MCF 10A (cell line): ENCODE measurements at regions of chrX and their contacts with region 1.

Region 1: DNA sequence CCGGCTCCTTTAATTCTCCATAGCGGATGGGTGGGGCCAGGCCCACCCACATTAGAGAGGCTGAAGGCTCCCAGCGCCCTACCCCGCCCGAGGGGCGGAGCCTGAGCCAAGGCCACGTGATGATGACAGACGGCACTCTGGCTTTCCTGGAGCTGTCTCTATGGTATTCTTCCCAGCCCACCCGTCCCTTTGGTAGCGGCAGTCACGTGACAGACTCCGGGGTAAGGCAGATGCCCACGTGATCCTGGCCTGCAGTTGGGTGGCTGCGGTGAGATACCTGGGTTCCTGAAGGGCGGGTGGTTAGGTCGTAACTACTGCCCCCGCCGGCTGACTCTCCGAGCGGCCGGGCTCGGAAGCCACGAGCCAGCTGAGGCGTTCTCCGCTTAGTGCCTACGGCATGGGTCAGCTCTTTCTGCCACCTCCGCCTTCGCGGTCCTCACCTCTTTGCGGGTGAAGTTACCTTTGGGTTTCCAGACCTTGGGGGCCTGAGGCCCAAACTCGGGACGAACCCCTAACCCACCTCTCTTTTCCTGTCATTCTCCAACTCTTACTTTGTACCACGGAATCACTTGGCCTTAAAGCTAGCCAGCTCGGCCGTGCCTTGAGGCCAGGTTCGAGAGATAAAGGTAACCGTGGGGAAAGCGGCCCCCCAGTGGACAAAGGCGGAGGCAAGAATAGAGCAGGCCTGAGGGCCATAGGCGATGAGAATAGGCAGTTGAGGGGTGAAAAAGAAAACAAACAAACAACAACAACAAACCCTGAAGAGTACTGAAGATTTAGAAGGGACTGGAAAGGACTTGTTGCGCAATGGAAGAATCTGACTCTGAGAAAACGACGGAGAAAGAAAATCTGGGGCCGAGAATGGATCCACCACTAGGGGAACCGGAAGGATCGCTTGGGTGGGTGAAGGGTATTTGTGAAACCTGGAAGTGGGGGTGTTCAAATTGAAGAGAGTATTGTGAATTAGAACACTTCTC is at the start of gene RRAGB:
- DNase-seq: peak; percentile 93
- H3K4me3 Mint-ChIP-seq: peak within 1 kb of the TSS; percentile 82
- H3K27ac Mint-ChIP-seq: peak within 1 kb of the TSS; percentile 83
- H3K4me1 Mint-ChIP-seq: no peaks in the 10 kb centered on the region
- H3K27me3 Mint-ChIP-seq: no peaks in the 10 kb centered on the region
- CTCF ChIP-seq: peak; percentile 37
- total RNA-seq, gene RRAGB: 7.9 and 10.6 TPM in 2 replicates

Region 2: GRCh38 chrX:55135171-55135570 is 582.6 kb before region 1 on chrX:
- CTCF ChIA-PET with region 1: interaction called, 4 read pairs
- POLR2A ChIA-PET with region 1: no interaction called
- intact Hi-C with region 1: loop called (anchors 1 kb)
- DNase-seq: peak; percentile 47
- H3K4me3 Mint-ChIP-seq: no peak overlapping the region
- H3K27ac Mint-ChIP-seq: no peak overlapping the region
- H3K4me1 Mint-ChIP-seq: no peaks in the 10 kb centered on the region
- H3K27me3 Mint-ChIP-seq: peaks cover 53% of the 10 kb centered on the region
- CTCF ChIP-seq: peak; percentile 45

Region 3: DNA sequence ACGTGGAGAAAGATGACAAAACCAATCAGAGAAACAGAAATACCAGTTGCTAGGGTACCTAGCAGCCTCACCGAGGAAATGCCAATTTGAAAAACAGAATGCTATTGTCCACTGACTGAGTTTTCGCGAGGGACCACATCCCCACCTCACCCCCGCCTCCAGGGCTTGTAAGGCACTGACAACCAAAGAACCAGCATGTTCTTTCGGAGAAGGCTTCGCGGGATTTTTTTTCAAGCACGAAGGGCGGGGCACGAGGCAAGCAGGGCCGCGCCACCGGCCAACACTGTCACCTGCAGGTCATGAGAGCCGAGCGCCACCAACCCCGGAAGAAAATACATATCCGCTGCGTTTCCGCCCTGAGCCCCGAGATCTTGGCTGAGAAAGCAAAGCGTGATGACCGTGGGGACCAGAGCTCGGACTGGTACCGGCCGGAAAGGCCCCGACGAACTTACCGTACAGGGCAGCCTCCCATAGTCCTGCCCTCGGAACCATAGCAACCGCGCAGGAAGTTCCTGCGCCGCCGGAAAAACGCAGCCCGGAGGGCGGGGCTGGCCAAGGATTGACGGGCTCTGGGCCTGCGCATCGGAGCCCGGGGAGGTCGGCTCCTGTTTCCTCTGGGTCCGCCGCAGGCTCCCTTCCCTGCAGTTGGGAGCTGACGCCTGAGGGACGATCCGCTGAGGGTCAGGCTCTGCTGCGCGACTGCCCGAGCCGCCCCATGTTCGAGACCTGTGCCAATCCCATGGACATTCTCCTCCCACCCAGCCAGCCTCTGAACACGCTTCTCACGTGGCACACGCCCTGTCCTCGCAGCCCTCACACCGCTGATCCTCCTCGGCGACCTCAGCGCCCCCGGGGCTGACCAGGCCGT is 556.9 kb before region 1 on chrX:
- CTCF ChIA-PET with region 1: no interaction called
- POLR2A ChIA-PET with region 1: interaction called, 11 read pairs
- intact Hi-C with region 1: no loop called
- DNase-seq: peak; percentile 83
- H3K4me3 Mint-ChIP-seq: peak overlapping the region; percentile 83
- H3K27ac Mint-ChIP-seq: peak overlapping the region; percentile 90
- H3K4me1 Mint-ChIP-seq: peaks cover 6% of the 10 kb centered on the region
- H3K27me3 Mint-ChIP-seq: peaks cover 48% of the 10 kb centered on the region
- CTCF ChIP-seq: peak; percentile 6

Region 4: GRCh38 chrX:56232221-56233082 is 514.6 kb after region 1 on chrX and contains the start of gene KLF8:
- CTCF ChIA-PET with region 1: interaction called, 5 read pairs
- POLR2A ChIA-PET with region 1: no interaction called
- intact Hi-C with region 1: loop called (anchors 5 kb)
- DNase-seq: peak; percentile 83
- H3K4me3 Mint-ChIP-seq: peak within 1 kb of the TSS; percentile 83
- H3K27ac Mint-ChIP-seq: peak within 1 kb of the TSS; percentile 84
- H3K4me1 Mint-ChIP-seq: peaks cover 13% of the 10 kb centered on the region
- H3K27me3 Mint-ChIP-seq: peaks cover 42% of the 10 kb centered on the region
- CTCF ChIP-seq: no peak
- total RNA-seq, gene KLF8: 12.6 and 14.0 TPM in 2 replicates